ENCODE measurements at regions of chr12 and their contacts with region 1.

Region 1: GRCh38 chr12:52278541-52279421 is 4.3 kb downstream of the KRT86 start:
- DNase-seq: peak; percentile 77
- H3K4me3 Mint-ChIP-seq: peak overlapping the region; percentile 66
- H3K27ac Mint-ChIP-seq: peak overlapping the region; percentile 98
- H3K4me1 Mint-ChIP-seq: peaks cover 40% of the 10 kb centered on the region
- H3K27me3 Mint-ChIP-seq: no peaks in the 10 kb centered on the region
- CTCF ChIP-seq: peak; percentile 98

Region 2: GRCh38 chr12:52132754-52133161 is 146.0 kb before region 1 on chr12:
- CTCF ChIA-PET with region 1: no interaction called
- POLR2A ChIA-PET with region 1: no interaction called
- intact Hi-C with region 1: no loop called
- DNase-seq: peak; percentile 92
- H3K4me3 Mint-ChIP-seq: no peak overlapping the region
- H3K27ac Mint-ChIP-seq: peak overlapping the region; percentile 57
- H3K4me1 Mint-ChIP-seq: peaks cover 21% of the 10 kb centered on the region
- H3K27me3 Mint-ChIP-seq: no peaks in the 10 kb centered on the region
- CTCF ChIP-seq: no peak

Region 3: DNA sequence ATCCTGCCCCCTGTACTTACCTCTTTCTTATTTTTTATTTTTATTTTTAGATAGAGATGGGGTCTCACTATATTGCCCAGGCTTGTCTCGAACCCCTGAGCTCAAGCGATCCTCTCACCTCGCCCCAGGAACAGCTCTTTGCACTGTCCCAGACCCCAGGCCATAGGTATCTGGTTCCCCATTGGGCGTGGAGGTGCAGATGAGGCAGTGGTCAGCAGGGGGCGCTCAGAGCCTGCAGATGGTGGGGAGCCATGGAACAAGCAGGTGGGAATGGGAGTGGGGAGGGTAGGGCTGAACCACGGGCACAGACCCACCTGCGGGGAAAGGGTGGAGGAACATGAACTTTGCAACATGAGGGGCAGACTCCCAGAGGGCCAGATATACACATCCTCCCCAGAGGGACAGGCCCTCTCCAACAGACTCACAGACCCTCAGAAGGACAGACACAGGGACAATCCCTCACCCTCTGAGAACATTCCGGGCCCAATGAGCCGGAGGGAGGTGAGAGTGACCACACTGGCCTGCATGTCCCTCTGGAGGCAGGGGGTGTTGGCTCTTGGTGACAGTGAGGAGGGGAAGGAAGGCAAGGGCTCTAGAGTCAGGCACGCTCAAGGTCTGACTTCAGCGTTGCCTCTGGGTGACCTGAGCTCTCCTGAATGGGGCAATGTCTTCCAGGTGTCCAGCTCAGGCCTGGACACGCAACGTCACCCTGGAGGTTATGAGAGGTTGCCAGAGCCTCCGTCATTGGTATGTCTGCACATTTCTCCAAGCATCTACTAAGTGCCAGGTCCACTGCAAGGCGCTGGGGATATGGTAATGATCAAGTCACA is 121.8 kb before region 1 on chr12:
- CTCF ChIA-PET with region 1: interaction called, 42 read pairs
- POLR2A ChIA-PET with region 1: interaction called, 9 read pairs
- intact Hi-C with region 1: loop called (anchors 2 kb)
- DNase-seq: peak; percentile 85
- H3K4me3 Mint-ChIP-seq: no peak overlapping the region
- H3K27ac Mint-ChIP-seq: peak overlapping the region; percentile 91
- H3K4me1 Mint-ChIP-seq: peaks cover 30% of the 10 kb centered on the region
- H3K27me3 Mint-ChIP-seq: no peaks in the 10 kb centered on the region
- CTCF ChIP-seq: peak; percentile 98

Region 4: GRCh38 chr12:52213512-52214420 is 65.0 kb before region 1 on chr12:
- CTCF ChIA-PET with region 1: interaction called, 32 read pairs
- POLR2A ChIA-PET with region 1: interaction called, 7 read pairs
- intact Hi-C with region 1: no loop called
- DNase-seq: peak; percentile 85
- H3K4me3 Mint-ChIP-seq: no peak overlapping the region
- H3K27ac Mint-ChIP-seq: no peak overlapping the region
- H3K4me1 Mint-ChIP-seq: peaks cover 71% of the 10 kb centered on the region
- H3K27me3 Mint-ChIP-seq: no peaks in the 10 kb centered on the region
- CTCF ChIP-seq: peak; percentile 95

Region 5: DNA sequence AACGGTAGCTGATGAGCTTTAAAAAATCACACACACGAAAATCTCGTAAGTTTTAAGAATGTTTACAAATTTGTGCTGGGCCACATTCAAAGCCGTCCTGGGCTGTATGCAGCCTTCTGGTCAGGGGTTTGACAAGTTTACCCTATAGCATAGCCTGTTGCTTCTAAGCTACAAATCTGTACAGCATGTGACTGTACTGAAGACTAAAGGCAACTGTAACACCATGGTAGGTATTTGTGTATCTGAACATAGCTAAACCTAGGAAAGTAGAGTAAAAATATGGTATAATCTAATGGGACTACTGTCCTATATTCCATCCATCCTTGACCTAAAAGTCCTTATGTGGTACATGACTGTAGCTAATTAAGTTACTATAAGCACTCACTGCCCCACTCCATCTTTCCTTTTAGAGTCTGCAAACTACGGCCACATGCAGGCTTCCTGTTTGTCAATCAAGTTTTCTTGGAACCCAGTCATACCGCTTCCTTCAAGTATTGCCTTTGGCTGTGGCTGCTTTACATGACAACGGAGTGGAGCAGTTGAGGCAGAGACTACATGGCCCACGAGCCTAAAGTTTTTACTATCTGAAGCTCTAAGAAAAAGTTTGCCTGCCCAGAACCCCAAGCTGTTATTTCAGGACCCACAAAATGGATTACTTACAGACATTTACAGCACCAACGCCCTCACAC is 27.3 kb before region 1 on chr12:
- CTCF ChIA-PET with region 1: interaction called, 11 read pairs
- POLR2A ChIA-PET with region 1: interaction called, 13 read pairs
- intact Hi-C with region 1: no loop called
- DNase-seq: peak; percentile 56
- H3K4me3 Mint-ChIP-seq: no peak overlapping the region
- H3K27ac Mint-ChIP-seq: peak overlapping the region; percentile 35
- H3K4me1 Mint-ChIP-seq: peaks cover 28% of the 10 kb centered on the region
- H3K27me3 Mint-ChIP-seq: no peaks in the 10 kb centered on the region
- CTCF ChIP-seq: no peak

Region 6: DNA sequence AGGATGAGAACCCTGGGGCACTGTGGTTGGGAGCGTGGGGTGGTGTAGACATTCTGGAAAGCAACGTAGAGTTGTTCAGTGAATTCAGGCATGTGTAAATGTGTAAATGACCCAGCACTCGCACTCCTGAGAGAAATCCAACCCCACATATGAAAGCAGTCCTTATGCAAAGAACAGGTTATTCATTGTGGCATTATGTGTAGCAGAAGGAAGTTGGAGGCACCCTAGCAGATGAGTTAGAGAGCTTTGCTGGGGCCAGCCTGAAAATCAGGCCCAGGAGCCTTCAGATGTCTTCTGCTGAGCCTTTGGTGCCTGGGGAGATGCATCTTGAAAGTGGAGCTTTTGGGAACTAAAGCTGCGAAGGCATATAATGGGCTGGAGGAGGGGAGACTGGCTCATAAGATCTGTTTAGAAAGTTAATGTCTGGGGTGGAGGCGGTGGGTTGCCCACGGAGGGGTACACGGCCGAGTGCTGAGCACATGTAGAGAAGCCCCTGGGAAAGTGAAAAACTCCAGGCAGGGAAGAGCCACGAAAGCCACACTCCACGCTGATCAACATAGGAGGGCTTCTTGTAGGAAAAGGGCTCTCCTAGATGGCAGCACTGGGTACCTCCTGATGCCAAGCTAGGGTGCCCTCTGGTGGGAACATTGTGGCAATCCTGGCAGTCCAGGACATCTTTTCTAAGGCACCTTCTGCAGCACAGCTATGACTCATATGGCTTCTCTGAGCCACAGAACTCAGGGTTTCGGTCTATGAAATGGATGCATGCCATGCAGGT is 48.5 kb after region 1 on chr12:
- CTCF ChIA-PET with region 1: interaction called, 57 read pairs
- POLR2A ChIA-PET with region 1: interaction called, 24 read pairs
- intact Hi-C with region 1: loop called (anchors 1 kb)
- DNase-seq: peak; percentile 98
- H3K4me3 Mint-ChIP-seq: no peak overlapping the region
- H3K27ac Mint-ChIP-seq: no peak overlapping the region
- H3K4me1 Mint-ChIP-seq: peaks cover 14% of the 10 kb centered on the region
- H3K27me3 Mint-ChIP-seq: no peaks in the 10 kb centered on the region
- CTCF ChIP-seq: peak; percentile 97

Region 7: DNA sequence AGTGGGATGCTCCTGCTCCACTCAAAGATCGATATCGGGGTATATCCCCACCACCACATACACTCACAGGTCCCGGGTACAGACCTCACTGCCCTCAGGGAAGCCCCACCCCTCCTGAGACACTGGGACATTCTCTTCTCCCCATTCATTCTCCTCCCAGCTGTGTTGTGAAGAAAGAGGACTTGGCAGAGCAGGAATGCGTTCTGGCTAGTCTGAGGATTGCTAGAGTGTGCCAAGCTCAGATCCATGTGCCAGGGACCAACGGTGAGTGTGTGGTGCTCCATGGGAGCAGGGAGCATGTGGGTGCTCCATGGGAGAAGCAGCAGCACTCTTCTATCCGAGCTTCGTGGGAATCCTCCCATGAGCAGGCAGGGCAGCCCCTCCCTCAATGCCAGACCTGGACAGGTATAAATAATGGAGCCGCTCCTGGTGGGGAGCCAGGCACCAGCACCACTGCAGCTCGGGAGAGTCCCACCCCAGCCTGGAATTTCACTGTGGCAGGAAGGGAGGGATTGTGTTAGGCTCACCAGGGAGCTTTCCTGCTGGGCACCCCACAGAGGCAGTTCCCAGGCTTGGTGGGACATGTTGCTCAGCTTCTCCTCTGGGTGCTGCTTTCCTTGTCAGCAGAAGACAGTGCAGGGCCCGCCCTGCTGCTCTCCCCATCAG is 243.7 kb after region 1 on chr12:
- CTCF ChIA-PET with region 1: no interaction called
- POLR2A ChIA-PET with region 1: interaction called, 37 read pairs
- intact Hi-C with region 1: no loop called
- DNase-seq: peak; percentile 98
- H3K4me3 Mint-ChIP-seq: peak overlapping the region; percentile 80
- H3K27ac Mint-ChIP-seq: peak overlapping the region; percentile 96
- H3K4me1 Mint-ChIP-seq: peaks cover 44% of the 10 kb centered on the region
- H3K27me3 Mint-ChIP-seq: no peaks in the 10 kb centered on the region
- CTCF ChIP-seq: no peak

Region 8: GRCh38 chr12:53133722-53134121 is 854.9 kb after region 1 on chr12:
- CTCF ChIA-PET with region 1: no interaction called
- POLR2A ChIA-PET with region 1: no interaction called
- intact Hi-C with region 1: no loop called
- DNase-seq: no peak
- H3K4me3 Mint-ChIP-seq: no peak overlapping the region
- H3K27ac Mint-ChIP-seq: no peak overlapping the region
- H3K4me1 Mint-ChIP-seq: no peaks in the 10 kb centered on the region
- H3K27me3 Mint-ChIP-seq: peaks cover 17% of the 10 kb centered on the region
- CTCF ChIP-seq: no peak